ENCODE measurements at regions of chr3 and their contacts with region 1.

Region 1: DNA sequence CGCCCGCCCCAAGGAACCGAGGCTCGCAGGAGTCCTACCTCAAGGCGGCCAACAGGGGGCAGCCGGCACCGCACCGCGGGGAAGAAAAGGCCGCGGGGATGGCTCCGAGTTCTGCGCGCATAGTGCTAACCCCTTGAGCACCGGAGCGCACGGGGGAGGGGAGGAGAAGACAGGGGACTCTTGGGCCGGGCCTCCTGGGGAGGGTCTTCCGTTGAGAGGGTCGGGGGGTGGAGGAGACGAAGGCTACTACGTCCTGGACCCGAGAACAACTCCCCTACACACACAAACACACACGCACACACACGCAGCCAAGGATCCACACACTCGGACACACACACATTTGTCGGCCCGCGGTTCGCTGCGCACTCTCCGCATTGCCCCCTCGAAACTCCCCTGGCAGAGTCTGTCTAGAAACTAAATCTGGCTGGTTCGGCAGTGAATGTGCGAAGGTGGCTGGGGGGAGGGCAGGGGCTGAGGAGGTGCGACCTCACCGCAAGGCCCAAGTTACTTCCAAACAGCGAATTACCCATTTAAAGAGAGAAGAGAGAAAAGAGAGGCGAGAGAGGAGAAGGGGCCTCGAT is 1.8 kb downstream of the WNT5A start:
- DNase-seq: peak; percentile 55 to 70
- H3K4me3 ChIP-seq: peak overlapping the region; percentile 17
- H3K4me3 Mint-ChIP-seq: peak overlapping the region; percentile 90
- H3K27ac Mint-ChIP-seq: no peak overlapping the region
- H3K4me1 ChIP-seq: peaks cover 7% of the 10 kb centered on the region; the same call in 1 of the 2 replicates
- H3K4me1 Mint-ChIP-seq: no peaks in the 10 kb centered on the region
- H3K27me3 ChIP-seq: no peaks in the 10 kb centered on the region
- H3K27me3 Mint-ChIP-seq: peaks cover 10% of the 10 kb centered on the region
- CTCF ChIP-seq: peak; percentile 71 to 72

Region 2: GRCh38 chr3:55526332-55527030 is 41.2 kb after region 1 on chr3:
- CTCF ChIA-PET with region 1: no interaction called
- POLR2A ChIA-PET with region 1: no interaction called
- intact Hi-C with region 1: loop called (anchors 2 kb)
- DNase-seq: peak; percentile 73 to 78
- H3K4me3 ChIP-seq: no peak overlapping the region
- H3K4me3 Mint-ChIP-seq: no peak overlapping the region
- H3K27ac Mint-ChIP-seq: no peak overlapping the region
- H3K4me1 ChIP-seq: peaks cover 26% of the 10 kb centered on the region
- H3K4me1 Mint-ChIP-seq: peaks cover 23% of the 10 kb centered on the region
- H3K27me3 ChIP-seq: no peaks in the 10 kb centered on the region
- H3K27me3 Mint-ChIP-seq: no peaks in the 10 kb centered on the region
- CTCF ChIP-seq: no peak

Region 3: DNA sequence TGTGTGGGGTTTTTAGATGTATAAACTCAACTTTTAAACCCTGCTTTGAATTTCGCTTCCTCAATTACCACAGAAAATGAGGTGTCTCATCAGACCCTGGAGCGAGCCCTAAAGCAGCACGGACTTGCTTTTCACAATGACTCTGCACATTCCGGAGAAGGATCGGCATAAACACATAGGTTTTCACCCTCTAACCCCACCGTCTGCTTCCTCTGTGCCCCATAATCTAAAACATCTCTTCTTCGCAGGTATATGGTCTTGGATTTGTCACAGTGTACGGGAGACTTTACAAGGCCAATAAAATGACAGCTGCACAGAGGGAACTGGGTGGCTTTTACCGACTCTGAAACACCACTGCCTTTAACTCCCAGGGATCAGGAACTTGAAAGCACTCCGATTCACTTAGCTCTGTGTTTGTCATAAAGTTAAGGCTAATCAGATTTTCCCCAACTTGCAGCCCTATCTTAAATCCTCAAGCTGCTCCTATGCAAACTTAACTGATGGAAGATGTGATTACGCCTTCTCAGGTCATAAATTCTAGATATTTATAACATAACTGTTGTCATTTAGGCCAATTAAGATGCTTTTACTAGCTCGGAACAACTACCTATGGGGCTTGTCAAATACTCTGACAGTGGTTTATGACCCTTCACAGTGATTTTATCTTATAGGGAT is 135.2 kb after region 1 on chr3:
- CTCF ChIA-PET with region 1: interaction called, 4 read pairs
- POLR2A ChIA-PET with region 1: no interaction called
- intact Hi-C with region 1: loop called (anchors 2 kb)
- DNase-seq: peak; percentile 47 to 67
- H3K4me3 ChIP-seq: no peak overlapping the region
- H3K4me3 Mint-ChIP-seq: peak overlapping the region; percentile 68
- H3K27ac Mint-ChIP-seq: peak overlapping the region; percentile 89
- H3K4me1 ChIP-seq: peaks cover 47% of the 10 kb centered on the region
- H3K4me1 Mint-ChIP-seq: peaks cover 37% of the 10 kb centered on the region
- H3K27me3 ChIP-seq: no peaks in the 10 kb centered on the region
- H3K27me3 Mint-ChIP-seq: no peaks in the 10 kb centered on the region
- CTCF ChIP-seq: no peak

Region 4: GRCh38 chr3:55746808-55747413 is 261.6 kb after region 1 on chr3:
- CTCF ChIA-PET with region 1: no interaction called
- POLR2A ChIA-PET with region 1: no interaction called
- intact Hi-C with region 1: loop called (anchors 2 kb)
- DNase-seq: peak in 1 of 2 experiments; percentile 7
- H3K4me3 ChIP-seq: no peak overlapping the region
- H3K4me3 Mint-ChIP-seq: no peak overlapping the region
- H3K27ac Mint-ChIP-seq: no peak overlapping the region
- H3K4me1 ChIP-seq: no peaks in the 10 kb centered on the region
- H3K4me1 Mint-ChIP-seq: no peaks in the 10 kb centered on the region
- H3K27me3 ChIP-seq: no peaks in the 10 kb centered on the region
- H3K27me3 Mint-ChIP-seq: no peaks in the 10 kb centered on the region
- CTCF ChIP-seq: peak; percentile 24 to 39

Region 5: DNA sequence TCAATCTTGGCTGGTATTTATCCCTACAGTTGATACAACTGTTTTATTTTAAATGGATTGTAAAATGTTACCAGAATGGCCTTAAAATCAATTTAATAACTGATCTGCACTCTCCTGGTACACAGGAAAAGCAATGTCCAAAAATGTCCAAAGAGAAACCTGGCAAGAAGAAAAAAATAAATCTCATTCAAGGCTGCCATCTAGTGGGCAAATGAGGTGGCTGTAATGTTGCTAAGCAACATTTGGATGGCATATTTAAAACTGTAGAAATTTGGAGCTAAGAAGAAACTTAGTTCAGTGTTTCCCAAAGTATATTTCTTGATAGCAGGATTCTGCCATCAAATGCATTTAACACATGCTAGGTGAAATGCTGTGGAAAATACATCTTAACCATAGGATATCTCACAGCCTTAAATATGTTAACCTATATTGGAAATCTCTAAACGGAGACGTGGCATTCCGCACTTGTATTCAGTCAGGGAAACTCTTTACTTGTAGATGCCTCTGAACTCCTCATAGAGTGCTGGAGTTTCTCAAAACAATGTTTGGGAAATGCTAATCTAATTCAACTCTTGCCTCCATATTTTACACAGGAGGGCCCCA is 766.1 kb after region 1 on chr3:
- CTCF ChIA-PET with region 1: no interaction called
- POLR2A ChIA-PET with region 1: no interaction called
- intact Hi-C with region 1: loop called (anchors 5 kb)
- DNase-seq: peak in 1 of 2 experiments; percentile 62
- H3K4me3 ChIP-seq: no peak overlapping the region
- H3K4me3 Mint-ChIP-seq: no peak overlapping the region
- H3K27ac Mint-ChIP-seq: no peak overlapping the region
- H3K4me1 ChIP-seq: peaks cover 18% of the 10 kb centered on the region; the same call in 1 of the 2 replicates
- H3K4me1 Mint-ChIP-seq: peaks cover 9% of the 10 kb centered on the region
- H3K27me3 ChIP-seq: no peaks in the 10 kb centered on the region
- H3K27me3 Mint-ChIP-seq: no peaks in the 10 kb centered on the region
- CTCF ChIP-seq: peak; percentile 63 to 76

Measured in Caco-2 (cell line).